Heart left ventricle (tissue), 16 donors: ENCODE measurements at regions of chr10 and their contacts with region 1.

Region 1: DNA sequence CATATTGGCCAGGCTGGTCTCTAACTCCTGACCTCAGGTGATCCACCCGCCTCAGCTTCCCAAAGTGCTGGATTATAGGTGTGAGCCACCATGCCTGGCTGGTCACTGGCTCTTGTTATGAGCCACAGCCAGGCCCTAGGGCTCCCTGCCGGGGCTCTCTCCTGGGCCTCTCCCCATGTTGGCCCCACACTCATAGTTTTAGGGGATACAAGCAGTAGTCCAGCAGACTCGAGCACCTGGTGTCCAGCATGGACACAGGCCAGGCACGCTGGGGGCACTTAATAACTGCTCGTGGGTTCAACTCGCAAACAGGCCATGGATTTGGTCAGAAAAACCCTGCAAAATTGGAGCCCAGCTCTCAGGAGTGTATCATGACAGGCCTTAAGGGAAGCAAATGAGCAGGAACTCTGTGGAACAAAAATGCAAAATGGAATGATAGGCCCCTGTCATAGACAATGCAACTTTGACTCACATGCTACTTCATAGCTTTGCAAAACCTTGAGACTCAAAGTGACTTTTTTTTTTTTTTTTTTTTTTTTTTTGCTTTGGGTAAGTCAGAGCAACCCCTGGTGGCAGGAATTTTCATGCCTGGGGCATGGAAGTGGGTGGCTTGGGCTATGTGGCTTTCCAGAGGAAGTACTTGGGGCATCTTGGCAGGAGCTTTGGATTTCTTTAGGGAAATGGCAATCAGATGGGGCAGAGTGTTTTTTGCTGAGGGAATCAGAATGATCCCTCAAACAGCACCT is 62.5 kb downstream of the TACC2 start:
- DNase-seq: peak in 3 of 5 donors; percentile 44 to 55 (median 48)
- ATAC-seq: peak in 2 of 4 donors; percentile 27 to 33
- H3K4me3 ChIP-seq: no peak overlapping the region
- H3K27ac ChIP-seq: peak overlapping the region in 10 of 12 donors; percentile 19 to 77 (median 43)
- H3K4me1 ChIP-seq: peaks cover 0 to 57% (median 24%) of the 10 kb centered on the region in 12 donors
- H3K27me3 ChIP-seq: no peaks in the 10 kb centered on the region
- CTCF ChIP-seq: peak; percentile 38 to 82 (median 62)
- POLR2A ChIP-seq: no peak

Region 2: GRCh38 chr10:121927841-121928527 is 123.4 kb before region 1 on chr10 and contains the start of gene ATE1:
- intact Hi-C with region 1: loop called in 5 of 10 experiments (anchors 5 to 10 kb)
- DNase-seq: peak; percentile 92 to 95 (median 94)
- ATAC-seq: peak; percentile 91 to 98 (median 96)
- H3K4me3 ChIP-seq: peak within 1 kb of the TSS; percentile 82 to 100 (median 94)
- H3K27ac ChIP-seq: peak within 1 kb of the TSS; percentile 90 to 100 (median 98)
- H3K4me1 ChIP-seq: peaks cover 0 to 41% (median 18%) of the 10 kb centered on the region in 12 donors
- H3K27me3 ChIP-seq: no peaks in the 10 kb centered on the region
- CTCF ChIP-seq: peak in 6 of 12 donors; percentile 10 to 46 (median 26)
- POLR2A ChIP-seq: peak in 1 of 2 donors; percentile 73
- total RNA-seq, gene ATE1: 30.3 to 50.1 (median 40.4) TPM

Region 3: GRCh38 chr10:122010405-122011050 is 40.9 kb before region 1 on chr10:
- intact Hi-C with region 1: no loop called
- DNase-seq: no peak
- ATAC-seq: no peak
- H3K4me3 ChIP-seq: no peak overlapping the region
- H3K27ac ChIP-seq: peak overlapping the region in 7 of 12 donors; percentile 2 to 82 (median 24)
- H3K4me1 ChIP-seq: peaks cover 0 to 60% (median 19%) of the 10 kb centered on the region in 12 donors
- H3K27me3 ChIP-seq: no peaks in the 10 kb centered on the region
- CTCF ChIP-seq: no peak
- POLR2A ChIP-seq: no peak

Region 4: DNA sequence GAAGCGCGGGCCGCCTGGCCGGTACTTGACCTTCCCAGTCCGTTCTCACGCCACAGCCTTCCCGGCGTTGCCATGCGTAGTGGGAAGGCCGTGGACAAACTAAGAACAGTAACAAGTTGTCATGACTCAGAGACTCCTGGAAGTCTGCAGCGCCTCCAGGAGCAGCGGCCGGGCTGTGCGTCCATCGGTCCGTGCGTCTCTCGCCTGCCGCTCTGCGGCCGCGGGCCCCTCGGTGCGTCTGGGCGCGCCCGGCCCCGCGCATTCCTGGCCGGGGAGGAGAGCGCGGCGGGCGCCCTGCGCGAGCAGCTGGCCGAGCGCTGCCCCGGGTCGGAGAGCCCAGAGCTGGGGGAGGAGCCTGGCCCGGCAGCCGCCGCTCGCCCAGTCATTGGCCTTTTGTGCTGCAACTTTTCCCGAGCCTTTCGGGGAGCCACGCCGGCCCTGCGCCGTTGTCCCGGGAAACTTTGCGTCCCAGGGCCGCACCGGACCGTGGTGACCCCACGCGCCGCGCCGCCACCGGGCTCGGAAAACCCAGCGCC is 61.3 kb after region 1 on chr10:
- intact Hi-C with region 1: loop called (anchors 1 to 5 kb)
- DNase-seq: peak; percentile 86 to 94 (median 91)
- ATAC-seq: peak; percentile 54 to 90 (median 83)
- H3K4me3 ChIP-seq: peak overlapping the region; percentile 64 to 92 (median 81)
- H3K27ac ChIP-seq: peak overlapping the region; percentile 97 to 100 (median 99)
- H3K4me1 ChIP-seq: peaks cover 4 to 56% (median 42%) of the 10 kb centered on the region in 12 donors
- H3K27me3 ChIP-seq: peaks cover 0 to 16% (median 0%) of the 10 kb centered on the region in 9 donors
- CTCF ChIP-seq: peak; percentile 25 to 79 (median 54)
- POLR2A ChIP-seq: peak in 1 of 2 donors; percentile 67

Region 5: DNA sequence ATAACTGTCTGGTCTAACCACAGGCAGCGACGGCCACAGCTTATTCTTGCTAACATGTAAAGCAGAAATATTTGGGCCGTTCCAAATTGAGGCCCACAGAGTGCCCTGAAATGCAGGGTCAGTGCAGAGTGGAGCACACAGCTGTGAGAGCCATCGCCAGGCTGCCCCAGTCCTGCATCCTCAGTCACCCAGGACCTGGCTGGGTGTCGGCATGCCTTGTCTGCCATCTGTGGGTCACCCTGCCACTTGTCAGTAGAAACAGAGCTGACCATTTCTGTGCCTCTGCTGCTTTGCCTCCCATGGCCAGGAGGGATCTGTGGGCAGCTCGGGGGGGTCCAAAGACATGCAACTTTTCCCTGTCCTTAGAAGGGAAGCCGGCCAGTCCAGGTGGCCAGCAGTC is 162.3 kb after region 1 on chr10:
- intact Hi-C with region 1: loop called in 3 of 10 experiments (anchors 10 kb)
- DNase-seq: peak in 1 of 5 donors; percentile 35
- ATAC-seq: peak in 3 of 4 donors; percentile 53 to 75 (median 72)
- H3K4me3 ChIP-seq: no peak overlapping the region
- H3K27ac ChIP-seq: no peak overlapping the region
- H3K4me1 ChIP-seq: peaks cover 0 to 9% (median 0%) of the 10 kb centered on the region in 12 donors
- H3K27me3 ChIP-seq: no peaks in the 10 kb centered on the region
- CTCF ChIP-seq: peak in 7 of 12 donors; percentile 10 to 45 (median 14)
- POLR2A ChIP-seq: no peak

Region 6: DNA sequence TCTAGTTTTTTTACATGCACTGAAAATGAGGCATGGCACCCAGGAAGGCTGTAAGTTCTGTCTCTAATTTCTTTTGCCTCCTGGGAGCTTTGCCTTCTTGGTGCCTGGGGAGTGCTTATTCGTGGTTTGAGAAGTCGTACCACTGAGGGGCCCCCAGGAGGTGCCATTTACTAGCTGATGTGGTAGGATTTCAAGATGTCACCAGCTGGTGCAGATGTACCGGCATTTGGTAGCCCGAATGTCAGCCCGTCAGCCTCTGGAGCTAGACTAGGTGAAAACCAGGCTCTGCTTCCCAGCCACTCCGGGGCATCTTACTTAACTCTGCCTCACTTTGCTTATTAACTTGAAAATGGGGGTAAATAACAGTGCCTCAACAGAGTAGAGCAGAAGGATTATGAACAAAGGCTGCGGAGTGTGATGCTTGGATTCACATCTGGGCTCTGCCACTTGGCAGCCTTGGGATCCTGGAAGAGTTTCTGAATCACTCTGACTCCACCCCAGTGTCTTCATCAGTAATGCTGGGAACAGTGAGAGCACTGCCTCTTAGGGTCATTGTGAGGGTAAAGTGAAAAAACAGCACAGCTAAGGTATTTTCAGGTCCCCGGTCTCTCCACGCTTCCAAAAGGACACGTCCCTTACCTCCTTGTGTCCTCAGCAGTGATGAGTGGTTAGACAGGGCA is 188.3 kb after region 1 on chr10:
- intact Hi-C with region 1: loop called in 1 of 10 experiments (anchors 10 kb)
- DNase-seq: no peak
- ATAC-seq: no peak
- H3K4me3 ChIP-seq: no peak overlapping the region
- H3K27ac ChIP-seq: no peak overlapping the region
- H3K4me1 ChIP-seq: peaks cover 0 to 16% (median 4%) of the 10 kb centered on the region in 12 donors
- H3K27me3 ChIP-seq: no peaks in the 10 kb centered on the region
- CTCF ChIP-seq: no peak
- POLR2A ChIP-seq: no peak